ENCODE measurements at regions of chr9 and their contacts with region 1.

Region 1: DNA sequence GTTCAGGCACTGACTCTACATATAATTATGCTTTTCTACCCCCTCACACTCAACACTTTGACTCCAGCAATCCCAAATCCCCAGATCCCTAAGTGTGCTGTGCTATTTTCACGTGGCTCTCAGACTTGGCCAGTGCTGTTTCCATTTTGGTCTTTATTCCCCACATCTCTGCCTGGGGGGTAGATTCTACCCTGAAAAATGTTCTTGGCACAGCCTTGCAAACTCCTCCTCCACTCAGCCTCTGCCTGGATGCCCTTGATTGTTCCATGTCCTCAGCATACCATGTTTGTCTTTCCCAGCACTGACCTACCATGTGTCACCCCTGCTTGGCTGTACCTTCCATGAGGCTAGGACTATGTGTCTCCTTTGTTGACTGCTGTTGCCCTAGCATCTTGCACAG is 43.0 kb downstream of the FXN start:
- DNase-seq: no peak
- H3K4me3 ChIP-seq: no peak overlapping the region
- H3K27ac ChIP-seq: no peak overlapping the region
- H3K4me1 ChIP-seq: peaks cover 5% of the 10 kb centered on the region; the same call in 1 of the 2 replicates
- H3K27me3 ChIP-seq: no peaks in the 10 kb centered on the region
- CTCF ChIP-seq: no peak

Region 2: DNA sequence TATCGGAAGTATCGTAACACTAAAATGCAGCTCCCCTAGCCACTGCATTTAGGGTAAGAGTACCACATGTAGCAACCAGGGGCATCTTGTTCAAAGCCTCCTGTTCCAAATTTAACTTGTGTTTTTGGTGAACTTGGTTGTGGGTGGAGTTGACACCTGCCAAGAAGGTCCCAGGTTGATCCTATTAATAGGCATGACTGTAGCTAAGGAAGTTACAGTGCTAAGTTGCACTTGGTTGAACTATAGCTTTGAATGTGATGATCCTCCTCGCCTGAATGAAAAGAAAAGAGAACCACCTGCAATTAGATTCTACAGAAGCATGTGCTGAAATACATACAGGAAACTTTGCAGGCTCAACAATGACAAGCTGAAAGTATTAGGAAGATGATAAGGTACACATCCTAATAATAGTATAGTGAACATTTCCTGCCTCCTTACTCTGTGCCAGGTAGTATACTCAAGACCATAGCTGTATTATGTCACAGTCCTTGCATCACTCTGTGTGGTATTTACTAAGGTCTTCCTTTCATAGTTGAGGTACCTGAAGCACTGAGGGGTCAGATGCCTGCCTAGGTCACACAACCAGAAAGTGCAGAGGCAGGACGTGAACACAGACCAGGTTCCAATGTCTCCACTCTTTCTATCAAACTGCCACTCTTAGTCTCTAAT is 438.0 kb before region 1 on chr9:
- CTCF ChIA-PET with region 1: no interaction called
- POLR2A ChIA-PET with region 1: no interaction called
- intact Hi-C with region 1: no loop called
- DNase-seq: no peak
- H3K4me3 ChIP-seq: no peak overlapping the region
- H3K27ac ChIP-seq: no peak overlapping the region
- H3K4me1 ChIP-seq: no peaks in the 10 kb centered on the region
- H3K27me3 ChIP-seq: peaks cover 44% of the 10 kb centered on the region
- CTCF ChIP-seq: no peak

Region 3: GRCh38 chr9:69140123-69140735 is 61.6 kb after region 1 on chr9:
- CTCF ChIA-PET with region 1: no interaction called
- POLR2A ChIA-PET with region 1: interaction called, 11 read pairs
- intact Hi-C with region 1: no loop called
- DNase-seq: no peak
- H3K4me3 ChIP-seq: no peak overlapping the region
- H3K27ac ChIP-seq: no peak overlapping the region
- H3K4me1 ChIP-seq: no peaks in the 10 kb centered on the region
- H3K27me3 ChIP-seq: no peaks in the 10 kb centered on the region
- CTCF ChIP-seq: no peak

Region 4: DNA sequence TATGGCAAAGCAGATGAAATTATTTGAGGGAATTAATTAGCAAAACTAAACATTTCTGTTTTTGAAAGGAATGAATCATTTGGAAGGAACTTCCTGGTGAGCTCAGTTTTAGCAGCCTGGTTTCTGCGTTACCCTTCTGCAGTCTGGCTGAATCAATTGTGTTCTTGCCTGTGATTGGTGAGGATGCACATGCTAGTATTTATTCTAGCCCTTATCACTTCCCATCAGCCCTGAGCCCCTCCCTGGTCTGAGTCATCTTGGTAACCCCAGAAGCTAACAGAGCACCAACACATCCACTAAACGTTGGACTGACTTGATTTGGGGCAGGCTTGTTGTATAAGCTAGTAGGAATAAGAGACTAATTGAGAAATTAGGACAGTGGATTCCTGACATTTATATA is 102.1 kb after region 1 on chr9:
- CTCF ChIA-PET with region 1: no interaction called
- POLR2A ChIA-PET with region 1: interaction called, 11 read pairs
- intact Hi-C with region 1: no loop called
- DNase-seq: peak; percentile 86 to 99
- H3K4me3 ChIP-seq: peak overlapping the region; percentile 36; the same call in 1 of the 2 replicates
- H3K27ac ChIP-seq: peak overlapping the region; percentile 97
- H3K4me1 ChIP-seq: peaks cover 79% of the 10 kb centered on the region
- H3K27me3 ChIP-seq: no peaks in the 10 kb centered on the region
- CTCF ChIP-seq: no peak

Measured in PC-9 (cell line).